CD4-positive, alpha-beta T cell (primary cell): ENCODE measurements at regions of chr2 and their contacts with region 1.

Region 1: GRCh38 chr2:27683390-27684071 is 19.8 kb downstream of the SLC4A1AP start:
- DNase-seq: peak; percentile 63 to 95 (median 81)
- ATAC-seq: peak; percentile 91
- H3K4me3 ChIP-seq: no peak overlapping the region
- H3K4me3 Mint-ChIP-seq: no peak overlapping the region
- H3K27ac ChIP-seq: no peak overlapping the region
- H3K27ac Mint-ChIP-seq: peak overlapping the region; percentile 58
- H3K4me1 ChIP-seq: peaks cover 12% of the 10 kb centered on the region
- H3K4me1 Mint-ChIP-seq: peaks cover 7% of the 10 kb centered on the region
- H3K27me3 ChIP-seq: no peaks in the 10 kb centered on the region
- H3K27me3 Mint-ChIP-seq: no peaks in the 10 kb centered on the region
- CTCF ChIP-seq: peak; percentile 99

Region 2: GRCh38 chr2:27095745-27096651 is 587.5 kb before region 1 on chr2:
- CTCF ChIA-PET with region 1: no interaction called
- POLR2A ChIA-PET with region 1: no interaction called
- intact Hi-C with region 1: loop called in 1 of 2 experiments (anchors 5 kb)
- DNase-seq: peak in 8 of 14 experiments; percentile 19 to 73 (median 46)
- ATAC-seq: peak; percentile 88
- H3K4me3 ChIP-seq: peak overlapping the region; percentile 23
- H3K4me3 Mint-ChIP-seq: peak overlapping the region; percentile 4
- H3K27ac ChIP-seq: no peak overlapping the region
- H3K27ac Mint-ChIP-seq: no peak overlapping the region
- H3K4me1 ChIP-seq: peaks cover 9% of the 10 kb centered on the region
- H3K4me1 Mint-ChIP-seq: peaks cover 11% of the 10 kb centered on the region
- H3K27me3 ChIP-seq: no peaks in the 10 kb centered on the region
- H3K27me3 Mint-ChIP-seq: no peaks in the 10 kb centered on the region
- CTCF ChIP-seq: no peak

Region 3: GRCh38 chr2:27672723-27673486 is 10.6 kb before region 1 on chr2:
- CTCF ChIA-PET with region 1: interaction called, 49 read pairs
- POLR2A ChIA-PET with region 1: no interaction called
- intact Hi-C with region 1: no loop called
- DNase-seq: no peak
- ATAC-seq: no peak
- H3K4me3 ChIP-seq: no peak overlapping the region
- H3K4me3 Mint-ChIP-seq: no peak overlapping the region
- H3K27ac ChIP-seq: no peak overlapping the region
- H3K27ac Mint-ChIP-seq: no peak overlapping the region
- H3K4me1 ChIP-seq: no peaks in the 10 kb centered on the region
- H3K4me1 Mint-ChIP-seq: peaks cover 11% of the 10 kb centered on the region
- H3K27me3 ChIP-seq: no peaks in the 10 kb centered on the region
- H3K27me3 Mint-ChIP-seq: no peaks in the 10 kb centered on the region
- CTCF ChIP-seq: no peak

Region 4: GRCh38 chr2:27703638-27704341 is 20.3 kb after region 1 on chr2:
- CTCF ChIA-PET with region 1: interaction called, 17 read pairs
- POLR2A ChIA-PET with region 1: no interaction called
- intact Hi-C with region 1: no loop called
- DNase-seq: peak; percentile 71 to 91 (median 80)
- ATAC-seq: peak; percentile 91
- H3K4me3 ChIP-seq: no peak overlapping the region
- H3K4me3 Mint-ChIP-seq: no peak overlapping the region
- H3K27ac ChIP-seq: no peak overlapping the region
- H3K27ac Mint-ChIP-seq: no peak overlapping the region
- H3K4me1 ChIP-seq: peaks cover 7% of the 10 kb centered on the region
- H3K4me1 Mint-ChIP-seq: no peaks in the 10 kb centered on the region
- H3K27me3 ChIP-seq: no peaks in the 10 kb centered on the region
- H3K27me3 Mint-ChIP-seq: no peaks in the 10 kb centered on the region
- CTCF ChIP-seq: peak; percentile 97